AG04450 (cell line): ENCODE measurements at regions of chr2 and their contacts with region 1.

Region 1: GRCh38 chr2:219294356-219295351 is 14.5 kb downstream of the PTPRN start:
- DNase-seq: peak; percentile 36
- H3K4me3 ChIP-seq: peak overlapping the region; percentile 56
- H3K27ac ChIP-seq: peak overlapping the region; percentile 21
- H3K27me3 ChIP-seq: no peaks in the 10 kb centered on the region
- CTCF ChIP-seq: peak; percentile 89

Region 2: DNA sequence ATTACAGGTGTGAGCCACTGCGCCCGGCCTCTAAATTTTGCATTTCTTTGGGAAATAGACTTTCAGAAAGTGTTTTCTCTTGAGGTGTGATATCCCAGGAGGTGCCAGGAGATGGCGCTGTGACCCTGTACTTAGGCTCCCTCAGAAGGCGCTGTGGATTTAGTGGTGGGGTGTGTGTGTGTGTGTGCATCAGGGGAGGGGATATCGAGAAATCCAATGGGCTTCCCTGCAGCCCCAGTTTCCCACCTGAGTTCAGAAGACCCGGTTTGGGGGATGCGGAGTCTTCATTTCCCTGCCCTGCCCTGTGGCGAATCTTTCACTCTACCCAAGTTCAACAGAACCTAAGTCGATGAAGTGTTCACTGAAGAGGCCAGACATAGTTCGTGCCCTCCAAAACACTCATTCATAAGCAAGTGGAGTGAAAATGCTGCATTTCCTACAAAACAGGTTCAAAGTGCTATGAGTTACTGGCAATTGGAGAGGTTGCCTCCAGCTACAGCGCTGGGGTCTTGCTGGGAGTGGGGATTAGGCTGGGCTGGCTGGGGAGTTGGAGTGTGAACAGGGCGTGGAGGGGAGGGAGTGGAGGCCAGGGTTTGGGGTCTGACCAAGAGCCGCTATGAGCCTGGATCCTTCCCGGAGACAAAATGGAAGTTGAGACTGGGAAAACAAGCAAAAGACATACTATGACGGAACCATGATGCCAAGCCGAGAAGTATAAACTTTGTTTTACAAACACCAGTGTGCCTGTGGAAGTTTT is 441.6 kb before region 1 on chr2:
- CTCF ChIA-PET with region 1: no interaction called
- POLR2A ChIA-PET with region 1: no interaction called
- DNase-seq: peak; percentile 8
- H3K4me3 ChIP-seq: no peak overlapping the region
- H3K27ac ChIP-seq: no peak overlapping the region
- H3K27me3 ChIP-seq: peaks cover 51% of the 10 kb centered on the region
- CTCF ChIP-seq: peak; percentile 73

Region 3: GRCh38 chr2:219155054-219155644 is 139.5 kb before region 1 on chr2:
- CTCF ChIA-PET with region 1: interaction called, 131 read pairs
- POLR2A ChIA-PET with region 1: no interaction called
- DNase-seq: peak; percentile 34
- H3K4me3 ChIP-seq: no peak overlapping the region
- H3K27ac ChIP-seq: no peak overlapping the region
- H3K27me3 ChIP-seq: no peaks in the 10 kb centered on the region
- CTCF ChIP-seq: peak; percentile 58

Region 4: DNA sequence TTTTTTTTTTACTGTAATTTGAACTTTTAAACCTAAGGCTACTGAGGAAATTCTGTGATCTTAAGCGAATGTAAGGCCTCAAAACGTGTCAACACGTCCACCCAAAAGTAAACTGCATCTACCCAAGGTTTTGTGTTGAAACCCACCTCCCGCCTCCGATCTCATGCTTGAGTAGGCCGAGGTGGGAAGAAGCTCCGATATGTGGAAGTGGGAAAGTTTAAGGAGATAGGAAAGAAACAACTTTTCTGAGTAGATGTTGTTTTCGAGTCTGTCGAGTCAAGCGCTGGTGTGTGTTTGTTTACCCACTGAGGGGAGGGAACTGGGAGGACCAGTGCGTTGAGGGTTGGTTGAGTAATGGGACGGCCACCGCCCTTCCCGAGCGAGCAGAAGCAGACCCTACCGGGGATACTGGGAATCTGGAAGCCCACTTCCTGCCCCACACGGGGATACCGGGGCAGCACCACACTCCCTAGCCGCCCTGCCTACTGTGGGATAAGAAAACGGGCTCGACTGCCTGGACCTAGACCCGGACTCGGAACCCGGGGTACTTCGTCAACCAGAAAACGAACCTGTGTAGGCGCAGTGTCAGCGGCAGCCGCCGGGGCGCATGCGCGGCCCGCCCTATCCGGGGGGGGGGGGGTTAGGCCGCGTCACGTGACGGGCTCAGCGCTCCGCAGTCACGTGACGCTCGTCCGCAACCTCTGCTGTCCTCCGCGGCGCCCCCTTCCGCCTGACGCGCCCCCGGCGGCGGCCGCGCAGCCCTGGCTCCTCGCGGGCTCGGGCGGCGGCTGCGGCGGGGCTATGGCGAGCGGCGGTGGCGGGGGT is 116.9 kb before region 1 on chr2 and contains the start of gene RETREG2:
- CTCF ChIA-PET with region 1: interaction called, 50 read pairs
- POLR2A ChIA-PET with region 1: no interaction called
- DNase-seq: peak; percentile 62
- H3K4me3 ChIP-seq: peak within 1 kb of the TSS; percentile 94
- H3K27ac ChIP-seq: peak within 1 kb of the TSS; percentile 91
- H3K27me3 ChIP-seq: no peaks in the 10 kb centered on the region
- CTCF ChIP-seq: peak; percentile 11; the same call in 1 of the 2 replicates
- polyA plus RNA-seq, gene RETREG2: 71.7 and 78.7 TPM in 2 replicates

Region 5: GRCh38 chr2:219197388-219197787 is 97.3 kb before region 1 on chr2:
- CTCF ChIA-PET with region 1: no interaction called
- POLR2A ChIA-PET with region 1: no interaction called
- DNase-seq: no peak
- H3K4me3 ChIP-seq: no peak overlapping the region
- H3K27ac ChIP-seq: no peak overlapping the region
- H3K27me3 ChIP-seq: no peaks in the 10 kb centered on the region
- CTCF ChIP-seq: no peak

Region 6: GRCh38 chr2:219229305-219230058 is 65.2 kb before region 1 on chr2 and contains the starts of genes ANKZF1 and ATG9A:
- CTCF ChIA-PET with region 1: interaction called, 15 read pairs
- POLR2A ChIA-PET with region 1: interaction called, 5 read pairs
- DNase-seq: peak; percentile 93
- H3K4me3 ChIP-seq: peak within 1 kb of the TSS; percentile 71
- H3K27ac ChIP-seq: peak within 1 kb of the TSS; percentile 82
- H3K27me3 ChIP-seq: no peaks in the 10 kb centered on the region
- CTCF ChIP-seq: no peak
- polyA plus RNA-seq, gene ANKZF1: 20.3 and 22.0 TPM in 2 replicates
- polyA plus RNA-seq, gene ATG9A: 81.0 and 84.3 TPM in 2 replicates

Region 7: GRCh38 chr2:219278655-219279516 is 15.8 kb before region 1 on chr2 and contains the start of gene DNAJB2:
- CTCF ChIA-PET with region 1: interaction called, 115 read pairs
- POLR2A ChIA-PET with region 1: interaction called, 8 read pairs
- DNase-seq: peak; percentile 99
- H3K4me3 ChIP-seq: peak within 1 kb of the TSS; percentile 83
- H3K27ac ChIP-seq: peak within 1 kb of the TSS; percentile 99
- H3K27me3 ChIP-seq: no peaks in the 10 kb centered on the region
- CTCF ChIP-seq: no peak
- polyA plus RNA-seq, gene DNAJB2: 40.6 and 41.1 TPM in 2 replicates

Region 8: GRCh38 chr2:219388127-219388844 is 93.6 kb after region 1 on chr2:
- CTCF ChIA-PET with region 1: interaction called, 11 read pairs
- POLR2A ChIA-PET with region 1: no interaction called
- DNase-seq: peak; percentile 96
- H3K4me3 ChIP-seq: peak overlapping the region; percentile 49
- H3K27ac ChIP-seq: no peak overlapping the region
- H3K27me3 ChIP-seq: peaks cover 8% of the 10 kb centered on the region
- CTCF ChIP-seq: peak; percentile 46